A549 (cell line): ENCODE measurements at regions of chr1 and their contacts with region 1.

Region 1: GRCh38 chr1:157969697-157970485 is 23.6 kb upstream of the KIRREL1 start:
- DNase-seq: peak; percentile 60 to 72
- ATAC-seq: peak; percentile 70 to 84
- H3K4me3 ChIP-seq: no peak overlapping the region
- H3K27ac ChIP-seq: peak overlapping the region; percentile 75 to 87
- H3K4me1 ChIP-seq: peaks cover 44% of the 10 kb centered on the region
- CTCF ChIP-seq: peak; percentile 85
- EP300 ChIP-seq: no peak
- POLR2A ChIP-seq: no peak
- RAD21 ChIP-seq: peak; percentile 77 to 85

Region 2: GRCh38 chr1:157849229-157849875 is 120.5 kb before region 1 on chr1:
- CTCF ChIA-PET with region 1: no interaction called
- POLR2A ChIA-PET with region 1: no interaction called
- DNase-seq: no peak
- ATAC-seq: no peak
- H3K4me3 ChIP-seq: no peak overlapping the region
- H3K27ac ChIP-seq: no peak overlapping the region
- H3K4me1 ChIP-seq: no peaks in the 10 kb centered on the region
- CTCF ChIP-seq: no peak
- EP300 ChIP-seq: no peak
- POLR2A ChIP-seq: no peak
- RAD21 ChIP-seq: no peak

Region 3: GRCh38 chr1:157984469-157984868 is 14.6 kb after region 1 on chr1:
- CTCF ChIA-PET with region 1: interaction called, 139 read pairs
- POLR2A ChIA-PET with region 1: no interaction called
- DNase-seq: no peak
- ATAC-seq: no peak
- H3K4me3 ChIP-seq: no peak overlapping the region
- H3K27ac ChIP-seq: no peak overlapping the region
- H3K4me1 ChIP-seq: no peaks in the 10 kb centered on the region
- CTCF ChIP-seq: no peak
- EP300 ChIP-seq: no peak
- POLR2A ChIP-seq: no peak
- RAD21 ChIP-seq: no peak

Region 4: DNA sequence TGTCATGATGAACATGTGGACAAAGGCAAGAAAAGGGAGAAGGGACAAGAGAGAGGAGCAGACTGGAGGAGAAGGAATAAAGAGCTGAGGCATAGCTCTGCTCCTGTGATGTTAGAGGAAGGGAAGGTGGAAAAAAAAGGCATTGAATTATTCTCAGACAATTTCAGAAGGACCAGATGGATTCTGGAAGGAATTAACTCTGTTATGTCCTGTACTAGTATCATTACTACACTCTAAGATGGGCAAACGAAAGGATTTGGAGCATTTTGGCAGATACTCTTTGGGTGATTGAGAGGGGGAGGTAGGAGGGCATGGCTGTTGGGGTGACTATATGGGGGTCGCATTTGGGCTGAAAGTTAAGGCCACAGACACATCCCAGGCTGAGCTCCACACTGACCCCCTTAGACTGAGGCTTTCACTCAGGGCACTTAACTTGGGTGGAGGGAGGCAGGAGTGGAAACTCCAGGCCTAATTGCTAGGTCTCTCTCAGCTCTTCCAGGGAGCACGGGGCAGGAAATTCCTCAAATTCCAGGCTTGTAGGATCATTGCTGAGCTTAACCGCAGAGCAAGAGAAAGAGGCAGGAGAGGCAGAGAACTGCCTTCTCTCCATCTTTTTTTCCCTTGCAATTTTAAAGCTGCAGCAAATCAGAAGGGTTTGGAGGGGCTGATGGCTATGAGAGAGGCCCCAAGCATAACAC is 49.4 kb after region 1 on chr1:
- CTCF ChIA-PET with region 1: interaction called, 1,281 read pairs
- POLR2A ChIA-PET with region 1: no interaction called
- DNase-seq: peak; percentile 76 to 87
- ATAC-seq: peak; percentile 94
- H3K4me3 ChIP-seq: no peak overlapping the region
- H3K27ac ChIP-seq: peak overlapping the region; percentile 89 to 98
- H3K4me1 ChIP-seq: peaks cover 88% of the 10 kb centered on the region
- CTCF ChIP-seq: no peak; the same call in 2 of the 3 replicates
- EP300 ChIP-seq: peak in 1 of 2 experiments; percentile 44; a peak in 1 of 5 replicates
- POLR2A ChIP-seq: no peak
- RAD21 ChIP-seq: peak; percentile 33 to 43; a peak in 3 of 5 replicates